ENCODE measurements at regions of chr1 and their contacts with region 1.

Region 1: DNA sequence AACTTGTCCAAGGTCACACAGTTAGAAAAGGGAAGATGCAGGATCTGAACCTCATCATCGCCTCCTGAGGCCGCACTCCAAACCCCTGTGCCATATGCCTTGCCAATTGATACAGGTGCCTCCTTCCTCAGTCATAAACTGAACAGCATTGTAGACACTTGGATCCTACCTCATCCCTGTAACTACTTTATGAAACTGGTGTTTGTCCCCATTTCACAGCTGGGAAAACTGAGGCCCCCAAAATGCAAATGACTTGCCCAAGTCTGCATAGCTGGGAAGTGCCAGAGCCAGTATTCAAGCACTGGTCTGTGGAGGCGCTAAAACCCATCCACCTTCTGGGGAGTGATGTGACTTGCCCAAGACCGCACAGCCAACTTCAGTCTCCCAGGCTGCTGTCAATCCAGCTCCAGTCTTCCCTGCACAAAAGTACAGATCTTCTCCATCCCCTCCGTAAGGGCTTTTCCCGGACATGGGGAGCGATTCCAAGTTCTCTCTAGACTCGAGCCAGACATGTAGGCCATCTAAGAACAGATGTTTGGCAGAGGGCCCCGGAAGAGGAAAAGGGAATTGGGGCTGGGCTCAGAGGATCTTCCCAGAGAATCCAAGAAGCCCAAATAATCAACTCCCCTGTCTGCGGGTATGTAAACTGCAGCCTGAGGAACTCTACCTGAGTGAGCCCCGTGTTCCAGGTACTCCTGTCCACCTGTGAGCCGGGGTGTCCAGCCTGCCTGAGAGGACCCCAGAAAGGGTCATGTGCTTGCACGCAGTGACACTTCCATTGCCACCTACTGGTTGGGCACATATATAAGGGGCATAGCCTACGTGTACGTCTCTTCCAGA is 60.5 kb downstream of the SYT2 start:
- DNase-seq: no peak
- H3K4me3 ChIP-seq: no peak overlapping the region
- H3K27ac ChIP-seq: no peak overlapping the region
- H3K4me1 ChIP-seq: peaks cover 0 to 10% (median 4%) of the 10 kb centered on the region in 4 experiments; a peak in 6 of 7 replicates
- H3K27me3 ChIP-seq: peaks cover 0 to 12% (median 10%) of the 10 kb centered on the region in 4 experiments; a peak in 5 of 7 replicates
- CTCF ChIP-seq: peak in 2 of 3 experiments; percentile 2 to 20; a peak in 1 of 4 replicates
- EP300 ChIP-seq: no peak
- POLR2A ChIP-seq: no peak
- RAD21 ChIP-seq: no peak; a peak in 1 of 4 replicates

Region 2: DNA sequence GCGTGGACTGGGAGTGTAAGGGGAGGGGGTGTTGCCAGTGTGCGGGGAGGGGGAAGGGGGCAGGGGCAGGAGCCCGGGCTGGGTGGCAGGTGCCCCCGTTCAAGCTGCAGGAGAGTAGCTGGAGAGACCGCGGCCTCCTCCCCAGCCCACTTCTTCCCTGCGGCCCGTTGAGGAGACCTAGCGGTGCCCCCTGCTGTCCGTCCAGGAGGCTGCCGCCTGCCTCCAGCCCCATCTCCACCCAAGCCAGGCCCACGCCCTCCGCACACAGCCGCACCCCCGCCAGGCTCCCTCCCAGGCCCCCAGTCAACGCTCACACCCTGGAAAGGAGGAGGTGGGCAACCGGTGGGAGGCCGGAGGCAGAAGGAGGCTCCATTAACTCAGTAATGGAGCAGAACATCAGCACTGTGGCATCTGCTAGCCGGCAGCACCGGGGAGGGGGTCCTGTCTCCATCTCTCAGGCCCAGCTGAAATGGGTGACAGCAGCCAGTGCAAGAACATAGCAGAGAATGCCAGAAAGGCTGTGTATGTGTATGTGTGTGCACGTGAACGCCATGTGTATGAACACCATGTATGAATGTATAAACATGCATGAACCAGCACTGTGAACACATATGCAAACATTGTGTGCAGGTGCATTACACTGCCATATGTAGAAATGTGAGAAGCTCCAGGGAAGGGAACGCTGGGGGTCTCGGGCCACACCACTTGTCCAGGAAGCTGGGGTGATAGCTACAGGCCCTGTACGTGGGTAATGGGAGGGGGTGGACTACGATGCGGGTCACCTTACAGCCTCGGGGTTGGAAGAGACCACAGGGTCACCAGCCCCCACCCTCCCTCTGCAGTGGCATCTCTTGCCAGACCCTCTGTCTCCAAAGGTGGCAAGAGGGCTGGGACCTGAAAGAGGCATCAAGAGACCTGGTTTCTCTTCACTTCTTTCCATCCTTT is 24.1 kb before region 1 on chr1:
- CTCF ChIA-PET with region 1: interaction called, 12 read pairs
- POLR2A ChIA-PET with region 1: interaction called, 3 read pairs
- DNase-seq: peak; percentile 33 to 87
- H3K4me3 ChIP-seq: no peak overlapping the region
- H3K27ac ChIP-seq: no peak overlapping the region
- H3K4me1 ChIP-seq: peaks cover 0 to 13% (median 6%) of the 10 kb centered on the region in 4 experiments; a peak in 6 of 7 replicates
- H3K27me3 ChIP-seq: no peaks in the 10 kb centered on the region
- CTCF ChIP-seq: peak; percentile 61 to 82 (median 69)
- EP300 ChIP-seq: no peak
- POLR2A ChIP-seq: no peak
- RAD21 ChIP-seq: peak; percentile 63 to 74